B cell (primary cell): ENCODE measurements at regions of chr12 and their contacts with region 1.

Region 1: DNA sequence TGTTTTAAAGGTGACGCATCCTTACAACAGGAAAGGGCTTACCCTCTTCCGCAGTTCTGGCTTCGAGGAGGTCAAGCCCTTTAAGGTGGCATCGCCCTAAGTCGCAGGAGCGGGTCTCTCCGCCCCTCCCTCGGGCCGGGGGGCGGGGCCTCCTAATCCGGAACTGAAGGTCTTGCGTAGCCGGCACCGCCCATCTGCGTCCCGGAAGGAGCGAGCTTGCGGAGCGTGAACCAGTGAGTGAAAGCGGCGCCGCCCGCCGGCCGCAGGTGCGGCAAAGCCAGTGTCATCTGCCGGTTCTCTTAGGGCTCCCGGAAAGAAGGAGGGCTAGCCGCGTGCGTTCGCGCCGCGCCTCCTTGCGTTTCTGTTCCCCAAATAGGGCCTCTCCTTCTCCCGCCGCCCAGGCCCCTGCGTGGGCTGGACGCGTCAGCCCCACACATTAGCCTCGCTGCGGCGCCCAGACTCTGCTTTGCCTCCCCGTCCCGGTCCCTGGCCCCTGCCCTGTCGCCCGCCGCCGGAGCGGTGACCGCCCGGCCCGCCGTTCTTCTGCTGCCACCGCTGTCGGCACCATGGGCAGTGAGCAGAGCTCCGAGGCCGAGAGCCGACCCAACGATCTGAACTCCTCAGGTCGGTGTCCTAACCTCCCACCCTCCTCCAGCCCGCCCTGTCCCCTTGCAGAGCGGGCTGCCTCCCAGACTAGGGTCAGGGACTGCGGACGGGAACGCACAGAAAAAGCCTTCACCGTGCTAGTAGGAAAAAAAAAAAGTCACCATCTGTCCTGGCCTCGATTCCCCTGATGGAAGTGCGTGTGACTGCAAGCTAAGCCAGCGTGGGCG is at the start of gene BORCS5:
- DNase-seq: peak; percentile 100
- ATAC-seq: peak; percentile 92
- H3K4me3 ChIP-seq: peak within 1 kb of the TSS; percentile 74 to 93 (median 81)
- H3K4me3 Mint-ChIP-seq: peak within 1 kb of the TSS; percentile 92
- H3K27ac ChIP-seq: peak within 1 kb of the TSS; percentile 91 to 95
- H3K27ac Mint-ChIP-seq: peak within 1 kb of the TSS; percentile 94
- H3K4me1 ChIP-seq: peaks cover 21 to 25% of the 10 kb centered on the region in 2 donors
- H3K4me1 Mint-ChIP-seq: peaks cover 31% of the 10 kb centered on the region
- H3K27me3 ChIP-seq: no peaks in the 10 kb centered on the region
- H3K27me3 Mint-ChIP-seq: peaks cover 3% of the 10 kb centered on the region
- CTCF ChIP-seq: peak; percentile 11
- total RNA-seq, gene BORCS5: 46.2 and 51.7 TPM in 2 replicates

Region 2: DNA sequence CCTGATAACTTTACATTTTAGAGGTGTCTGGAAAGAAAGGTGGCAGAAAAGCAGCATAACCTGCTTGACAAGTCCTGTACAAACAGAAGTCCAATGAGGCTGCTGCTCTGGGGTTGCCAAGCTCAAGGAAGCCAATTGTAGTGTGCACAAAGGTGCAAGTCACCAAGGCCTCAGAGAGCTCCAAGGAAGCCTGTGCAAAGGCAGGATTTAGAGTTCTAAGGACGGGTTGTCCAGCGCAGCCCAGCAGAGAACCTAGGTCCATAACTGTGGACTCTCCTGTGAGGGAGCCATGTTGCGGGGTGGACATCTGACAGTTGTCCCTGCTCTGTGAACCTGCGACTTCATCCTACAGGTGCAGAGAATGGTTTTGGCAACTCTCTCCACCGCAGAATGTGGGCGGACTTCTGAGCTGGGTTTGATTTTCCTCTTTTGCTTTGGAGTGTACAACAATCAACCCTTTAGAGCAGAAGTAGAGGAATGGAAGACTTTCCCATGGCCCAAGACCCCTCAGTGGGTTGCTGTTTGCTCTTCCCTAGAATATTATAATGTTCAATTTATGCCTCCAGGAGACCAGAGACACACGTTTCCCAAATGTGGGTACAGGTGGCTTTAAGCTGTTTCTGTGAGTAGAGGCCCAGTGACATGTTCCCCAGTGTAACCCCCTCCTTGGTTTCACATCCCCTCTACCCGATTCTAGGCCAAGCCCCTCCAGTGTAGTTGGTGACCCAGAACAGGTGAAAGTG is 626.6 kb before region 1 on chr12:
- CTCF ChIA-PET with region 1: no interaction called
- POLR2A ChIA-PET with region 1: no interaction called
- intact Hi-C with region 1: loop called (anchors 10 kb)
- DNase-seq: peak; percentile 83
- ATAC-seq: peak; percentile 80
- H3K4me3 ChIP-seq: no peak overlapping the region
- H3K4me3 Mint-ChIP-seq: peak overlapping the region; percentile 79
- H3K27ac ChIP-seq: peak overlapping the region; percentile 69 to 76
- H3K27ac Mint-ChIP-seq: peak overlapping the region; percentile 94
- H3K4me1 ChIP-seq: peaks cover 82 to 94% of the 10 kb centered on the region in 2 donors
- H3K4me1 Mint-ChIP-seq: peaks cover 92% of the 10 kb centered on the region
- H3K27me3 ChIP-seq: no peaks in the 10 kb centered on the region
- H3K27me3 Mint-ChIP-seq: no peaks in the 10 kb centered on the region
- CTCF ChIP-seq: no peak

Region 3: DNA sequence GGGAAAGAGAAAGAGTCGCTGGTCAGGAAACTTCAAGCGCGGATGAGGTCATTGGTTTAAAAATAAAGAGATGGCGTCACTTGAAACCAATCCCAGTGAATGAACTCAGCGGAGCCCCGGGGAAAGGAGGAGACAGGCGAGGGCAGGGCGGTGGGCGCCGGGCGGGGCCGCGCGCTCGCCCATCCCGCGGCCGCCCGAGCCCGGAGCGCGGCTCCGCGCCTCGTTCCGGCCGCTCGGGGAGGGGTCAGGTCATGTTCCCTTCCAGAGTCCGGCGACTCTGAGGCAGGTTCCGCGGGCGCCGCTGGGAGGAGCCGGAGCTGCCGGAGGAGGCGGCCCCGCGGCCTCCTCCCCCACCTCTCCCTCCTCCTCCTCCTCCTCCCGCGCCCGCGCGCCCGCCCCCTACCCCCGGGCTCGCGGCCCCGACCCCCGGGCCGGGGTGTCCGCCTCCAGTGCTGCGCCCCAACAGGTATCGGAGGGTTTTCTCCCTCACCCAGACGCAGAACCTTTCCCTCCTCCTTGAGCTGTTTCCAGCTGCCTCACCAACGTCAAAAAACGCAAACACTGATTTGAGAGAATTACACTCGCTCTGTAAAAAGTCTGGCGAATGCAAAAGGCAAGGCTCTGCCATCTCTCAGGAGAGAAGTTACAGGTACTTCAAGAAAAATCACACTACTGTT is 205.6 kb after region 1 on chr12 and contains the start of gene DUSP16:
- CTCF ChIA-PET with region 1: interaction called, 7 read pairs
- POLR2A ChIA-PET with region 1: no interaction called
- intact Hi-C with region 1: loop called (anchors 1 kb)
- DNase-seq: peak; percentile 90
- ATAC-seq: peak; percentile 70
- H3K4me3 ChIP-seq: peak within 1 kb of the TSS; percentile 55 to 78 (median 72)
- H3K4me3 Mint-ChIP-seq: peak within 1 kb of the TSS; percentile 95
- H3K27ac ChIP-seq: peak within 1 kb of the TSS; percentile 38 to 82
- H3K27ac Mint-ChIP-seq: peak within 1 kb of the TSS; percentile 92
- H3K4me1 ChIP-seq: peaks cover 17 to 18% of the 10 kb centered on the region in 2 donors
- H3K4me1 Mint-ChIP-seq: peaks cover 20% of the 10 kb centered on the region
- H3K27me3 ChIP-seq: peaks cover 0 to 9% (median 3%) of the 10 kb centered on the region in 4 experiments
- H3K27me3 Mint-ChIP-seq: peaks cover 8% of the 10 kb centered on the region
- CTCF ChIP-seq: no peak
- total RNA-seq, gene DUSP16: 5.6 and 5.9 TPM in 2 replicates

Region 4: DNA sequence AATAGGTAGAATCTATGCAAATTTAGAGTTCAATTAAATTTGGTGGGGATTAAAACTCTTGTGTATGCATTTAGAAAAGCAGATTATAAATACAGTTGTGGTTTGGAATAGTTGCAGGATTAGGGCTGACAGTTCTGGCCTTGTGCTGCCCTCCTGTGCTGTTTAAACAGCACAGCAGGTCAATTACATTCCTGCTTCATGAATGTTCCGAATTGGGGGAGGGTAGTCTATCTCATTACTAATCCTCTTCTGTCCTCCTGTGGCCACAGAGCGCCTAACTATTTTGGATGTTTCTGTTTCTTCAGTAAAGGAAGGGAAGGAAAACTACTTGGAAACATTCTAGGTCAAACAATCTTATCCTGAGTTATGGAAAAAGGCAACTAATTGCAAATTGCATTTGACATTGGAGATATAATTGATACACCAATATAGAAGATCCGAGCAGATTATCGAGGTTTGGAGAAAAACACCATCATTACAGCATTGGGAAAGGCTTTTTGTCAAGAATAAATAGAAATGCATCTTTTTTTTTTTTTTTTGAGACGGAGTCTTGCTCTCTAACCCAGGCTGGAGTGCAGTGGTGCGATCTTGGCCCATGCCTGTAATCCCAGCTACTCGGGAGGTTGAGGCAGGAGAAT is 347.6 kb after region 1 on chr12:
- CTCF ChIA-PET with region 1: no interaction called
- POLR2A ChIA-PET with region 1: no interaction called
- intact Hi-C with region 1: loop called (anchors 1 kb)
- DNase-seq: peak; percentile 77
- ATAC-seq: peak; percentile 97
- H3K4me3 ChIP-seq: no peak overlapping the region
- H3K4me3 Mint-ChIP-seq: no peak overlapping the region
- H3K27ac ChIP-seq: no peak overlapping the region
- H3K27ac Mint-ChIP-seq: no peak overlapping the region
- H3K4me1 ChIP-seq: peaks cover 0 to 3% of the 10 kb centered on the region in 2 donors
- H3K4me1 Mint-ChIP-seq: peaks cover 7% of the 10 kb centered on the region
- H3K27me3 ChIP-seq: no peaks in the 10 kb centered on the region
- H3K27me3 Mint-ChIP-seq: no peaks in the 10 kb centered on the region
- CTCF ChIP-seq: peak; percentile 86

Region 5: GRCh38 chr12:12786716-12787601 is 429.9 kb after region 1 on chr12:
- CTCF ChIA-PET with region 1: interaction called, 3 read pairs
- POLR2A ChIA-PET with region 1: interaction called, 3 read pairs
- intact Hi-C with region 1: loop called (anchors 2 kb)
- DNase-seq: peak; percentile 85
- ATAC-seq: peak; percentile 92
- H3K4me3 ChIP-seq: peak overlapping the region; percentile 54 to 88 (median 77)
- H3K4me3 Mint-ChIP-seq: peak overlapping the region; percentile 90
- H3K27ac ChIP-seq: peak overlapping the region; percentile 77 to 82
- H3K27ac Mint-ChIP-seq: peak overlapping the region; percentile 92
- H3K4me1 ChIP-seq: peaks cover 10 to 24% of the 10 kb centered on the region in 2 donors
- H3K4me1 Mint-ChIP-seq: peaks cover 20% of the 10 kb centered on the region
- H3K27me3 ChIP-seq: no peaks in the 10 kb centered on the region
- H3K27me3 Mint-ChIP-seq: no peaks in the 10 kb centered on the region
- CTCF ChIP-seq: peak; percentile 14

Region 6: GRCh38 chr12:13100882-13101769 is 744.0 kb after region 1 on chr12:
- CTCF ChIA-PET with region 1: interaction called, 4 read pairs
- POLR2A ChIA-PET with region 1: no interaction called
- intact Hi-C with region 1: loop called (anchors 2 kb)
- DNase-seq: peak; percentile 97
- ATAC-seq: peak; percentile 77
- H3K4me3 ChIP-seq: peak overlapping the region; percentile 39 to 82 (median 71)
- H3K4me3 Mint-ChIP-seq: peak overlapping the region; percentile 88
- H3K27ac ChIP-seq: peak overlapping the region; percentile 97 to 99
- H3K27ac Mint-ChIP-seq: peak overlapping the region; percentile 96
- H3K4me1 ChIP-seq: peaks cover 52 to 63% of the 10 kb centered on the region in 2 donors
- H3K4me1 Mint-ChIP-seq: peaks cover 62% of the 10 kb centered on the region
- H3K27me3 ChIP-seq: no peaks in the 10 kb centered on the region
- H3K27me3 Mint-ChIP-seq: no peaks in the 10 kb centered on the region
- CTCF ChIP-seq: no peak